Right ventricle myocardium inferior (tissue), 1 donor: ENCODE measurements at regions of chr1 and their contacts with region 1.

Region 1: GRCh38 chr1:150829743-150830142 is 21.7 kb upstream of the CTSK start:
- DNase-seq: no peak
- ATAC-seq: no peak

Region 2: DNA sequence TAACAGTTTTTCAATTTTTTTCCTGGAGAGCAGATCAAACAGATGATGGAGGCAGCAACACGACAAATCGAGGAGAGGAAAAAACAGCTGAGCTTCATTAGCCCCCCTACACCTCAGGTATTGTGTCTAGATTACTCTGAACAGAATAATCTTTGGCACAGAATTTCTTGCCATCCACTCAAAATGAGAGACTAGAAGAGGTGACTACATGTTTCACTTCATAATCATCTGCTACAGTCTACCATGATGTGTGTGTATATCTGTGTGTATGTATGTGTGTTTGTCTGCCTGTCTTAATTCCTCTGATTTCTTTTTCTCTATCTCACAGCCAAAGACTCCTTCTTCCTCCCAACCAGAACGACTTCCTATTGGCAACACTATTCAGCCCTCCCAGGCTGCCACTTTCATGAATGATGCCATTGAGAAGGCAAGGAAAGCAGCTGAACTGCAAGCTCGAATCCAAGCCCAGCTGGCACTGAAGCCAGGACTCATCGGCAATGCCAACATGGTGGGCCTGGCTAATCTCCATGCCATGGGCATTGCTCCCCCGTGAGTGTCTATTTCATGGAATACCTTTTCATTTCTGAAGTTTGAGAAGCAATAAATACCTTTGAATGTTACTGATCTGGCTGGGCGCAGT is 497.0 kb before region 1 on chr1:
- intact Hi-C with region 1: loop called (anchors 10 kb)
- DNase-seq: no peak
- ATAC-seq: no peak

Region 3: DNA sequence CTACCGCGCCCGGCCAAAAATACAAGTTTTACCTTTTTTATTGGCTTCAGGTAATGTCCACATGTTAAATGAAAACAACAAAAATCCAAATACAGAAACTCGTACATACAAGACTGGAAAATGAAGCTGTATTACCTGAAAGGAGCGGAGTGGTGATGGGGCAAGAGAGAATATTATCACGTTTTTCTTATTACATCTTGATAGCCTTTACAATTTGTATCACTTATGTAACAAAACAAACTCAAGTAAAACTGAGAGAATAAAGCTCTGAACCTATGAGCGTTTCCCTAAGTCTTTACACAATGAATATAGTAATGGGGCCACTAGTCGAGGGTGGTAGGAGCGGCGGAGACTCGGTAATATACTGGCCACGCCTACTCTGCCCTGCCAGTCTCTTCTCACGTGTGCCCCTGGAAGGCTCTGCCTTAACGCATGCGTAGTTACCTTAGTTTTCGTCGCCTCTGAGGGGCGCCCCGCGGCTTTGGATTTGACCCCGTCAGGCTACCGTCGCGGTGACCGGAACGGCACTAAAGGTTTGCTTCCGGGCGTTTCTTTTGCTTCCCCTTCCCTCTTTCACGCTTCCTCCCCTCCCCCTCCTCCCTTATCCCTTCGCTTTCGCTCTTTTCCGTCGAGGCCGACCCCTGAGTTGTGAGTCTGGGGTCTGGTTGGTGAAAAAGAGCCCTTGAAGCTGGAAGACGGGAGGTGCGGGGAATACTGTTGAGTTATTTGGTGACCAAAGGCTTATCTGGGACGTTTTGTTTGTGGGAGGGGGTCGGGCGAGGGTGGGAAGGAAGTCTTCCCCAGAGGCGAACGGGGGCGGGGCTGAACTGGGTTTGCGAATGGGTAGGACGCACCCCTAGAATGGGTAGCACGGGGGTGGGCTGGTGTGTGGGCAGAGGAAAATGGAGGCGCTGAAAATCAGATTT is 96.3 kb after region 1 on chr1 and contains the start of gene SETDB1:
- intact Hi-C with region 1: loop called (anchors 10 kb)
- DNase-seq: peak; percentile 97
- ATAC-seq: peak; percentile 99
- total RNA-seq, gene SETDB1: 16.2 TPM